HepG2 (cell line): ENCODE measurements at regions of chr11 and their contacts with region 1.

Region 1: GRCh38 chr11:77047007-77047927 is 13.1 kb downstream of the B3GNT6 start:
- DNase-seq: peak; percentile 91
- ATAC-seq: peak; percentile 79
- H3K4me3 ChIP-seq: peak overlapping the region; percentile 14 to 62 (median 57); a peak in 3 of 6 replicates
- H3K27ac ChIP-seq: no peak overlapping the region
- H3K4me1 ChIP-seq: peaks cover 38% of the 10 kb centered on the region
- H3K27me3 ChIP-seq: peaks cover 0 to 23% of the 10 kb centered on the region in 2 experiments; a peak in 3 of 5 replicates
- CTCF ChIP-seq: peak; percentile 65
- EP300 ChIP-seq: no peak
- POLR2A ChIP-seq: no peak
- RAD21 ChIP-seq: peak; percentile 42; the same call in 1 of the 2 replicates

Region 2: GRCh38 chr11:76721755-76722677 is 325.3 kb before region 1 on chr11:
- CTCF ChIA-PET with region 1: no interaction called
- POLR2A ChIA-PET with region 1: no interaction called
- in situ Hi-C with region 1: no loop called
- intact Hi-C with region 1: loop called (anchors 10 kb)
- DNase-seq: peak; percentile 58
- ATAC-seq: peak; percentile 94
- H3K4me3 ChIP-seq: peak overlapping the region in 1 of 3 experiments; percentile 41; a peak in 1 of 6 replicates
- H3K27ac ChIP-seq: no peak overlapping the region
- H3K4me1 ChIP-seq: peaks cover 5% of the 10 kb centered on the region; the same call in 1 of the 2 replicates
- H3K27me3 ChIP-seq: peaks cover 0 to 18% of the 10 kb centered on the region in 2 experiments; a peak in 3 of 5 replicates
- CTCF ChIP-seq: peak; percentile 93
- EP300 ChIP-seq: no peak
- POLR2A ChIP-seq: no peak
- RAD21 ChIP-seq: peak; percentile 65; the same call in 1 of the 2 replicates

Region 3: GRCh38 chr11:76807206-76807875 is 239.9 kb before region 1 on chr11:
- CTCF ChIA-PET with region 1: interaction called, 3 read pairs
- POLR2A ChIA-PET with region 1: no interaction called
- in situ Hi-C with region 1: no loop called
- intact Hi-C with region 1: loop called (anchors 5 kb)
- DNase-seq: peak; percentile 68
- ATAC-seq: peak; percentile 93
- H3K4me3 ChIP-seq: peak overlapping the region in 1 of 3 experiments; percentile 20; a peak in 1 of 6 replicates
- H3K27ac ChIP-seq: no peak overlapping the region
- H3K4me1 ChIP-seq: peaks cover 22% of the 10 kb centered on the region
- H3K27me3 ChIP-seq: peaks cover 6 to 19% of the 10 kb centered on the region in 2 experiments; a peak in 4 of 5 replicates
- CTCF ChIP-seq: peak; percentile 92
- EP300 ChIP-seq: no peak
- POLR2A ChIP-seq: no peak
- RAD21 ChIP-seq: peak; percentile 67

Region 4: GRCh38 chr11:77073328-77074001 is 26.2 kb after region 1 on chr11:
- CTCF ChIA-PET with region 1: interaction called, 11 read pairs
- POLR2A ChIA-PET with region 1: no interaction called
- in situ Hi-C with region 1: no loop called
- intact Hi-C with region 1: no loop called
- DNase-seq: peak; percentile 45
- ATAC-seq: peak; percentile 89
- H3K4me3 ChIP-seq: no peak overlapping the region
- H3K27ac ChIP-seq: no peak overlapping the region
- H3K4me1 ChIP-seq: peaks cover 25% of the 10 kb centered on the region
- H3K27me3 ChIP-seq: peaks cover 4 to 46% of the 10 kb centered on the region in 2 experiments
- CTCF ChIP-seq: peak; percentile 60
- EP300 ChIP-seq: no peak
- POLR2A ChIP-seq: no peak
- RAD21 ChIP-seq: peak; percentile 15; the same call in 1 of the 2 replicates

Region 5: DNA sequence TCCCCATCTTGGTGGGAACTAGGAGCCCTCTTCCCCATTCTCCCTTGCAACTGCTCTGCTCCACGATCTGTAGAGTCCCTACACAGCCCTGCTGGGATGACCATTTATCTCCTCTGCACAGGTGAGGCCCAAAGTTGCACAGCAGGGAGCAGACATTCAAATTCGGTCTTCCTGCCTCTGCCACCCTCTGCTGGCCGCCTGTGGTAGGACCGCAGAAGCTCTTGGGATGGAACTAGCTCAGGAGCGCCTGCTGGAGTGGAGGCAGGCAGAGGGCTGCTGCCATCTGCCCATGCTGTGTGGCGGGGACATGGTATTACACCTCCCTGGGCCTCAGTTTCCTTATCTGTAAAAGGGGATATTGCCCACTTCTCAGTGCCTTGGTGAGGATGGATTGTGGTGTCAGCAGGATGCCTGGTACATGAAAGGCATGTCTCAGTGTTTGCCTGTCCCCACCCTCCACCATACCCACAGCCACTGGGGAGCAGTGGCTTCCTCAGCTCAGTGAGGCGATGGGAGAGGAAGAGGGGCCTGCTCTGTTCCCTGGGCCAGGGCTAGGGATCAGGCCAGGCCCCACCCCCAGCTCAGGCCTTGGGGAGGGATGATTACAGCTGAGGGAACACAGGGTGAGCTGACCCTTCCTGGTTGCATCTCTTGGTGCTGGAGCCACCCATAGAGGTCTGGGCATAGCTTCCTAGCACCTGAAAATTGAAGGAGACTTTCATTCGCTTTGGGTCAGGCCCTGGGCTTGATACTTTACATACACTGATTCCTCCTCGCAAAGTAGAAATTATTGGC is 44.1 kb after region 1 on chr11:
- CTCF ChIA-PET with region 1: interaction called, 85 read pairs
- POLR2A ChIA-PET with region 1: interaction called, 16 read pairs
- in situ Hi-C with region 1: loop called (anchors 5 kb)
- intact Hi-C with region 1: no loop called
- DNase-seq: peak; percentile 60
- ATAC-seq: peak; percentile 62
- H3K4me3 ChIP-seq: no peak overlapping the region
- H3K27ac ChIP-seq: no peak overlapping the region
- H3K4me1 ChIP-seq: peaks cover 38% of the 10 kb centered on the region
- H3K27me3 ChIP-seq: no peaks in the 10 kb centered on the region; a peak in 1 of 5 replicates
- CTCF ChIP-seq: peak; percentile 97
- EP300 ChIP-seq: no peak
- POLR2A ChIP-seq: no peak
- RAD21 ChIP-seq: peak; percentile 94

Region 6: DNA sequence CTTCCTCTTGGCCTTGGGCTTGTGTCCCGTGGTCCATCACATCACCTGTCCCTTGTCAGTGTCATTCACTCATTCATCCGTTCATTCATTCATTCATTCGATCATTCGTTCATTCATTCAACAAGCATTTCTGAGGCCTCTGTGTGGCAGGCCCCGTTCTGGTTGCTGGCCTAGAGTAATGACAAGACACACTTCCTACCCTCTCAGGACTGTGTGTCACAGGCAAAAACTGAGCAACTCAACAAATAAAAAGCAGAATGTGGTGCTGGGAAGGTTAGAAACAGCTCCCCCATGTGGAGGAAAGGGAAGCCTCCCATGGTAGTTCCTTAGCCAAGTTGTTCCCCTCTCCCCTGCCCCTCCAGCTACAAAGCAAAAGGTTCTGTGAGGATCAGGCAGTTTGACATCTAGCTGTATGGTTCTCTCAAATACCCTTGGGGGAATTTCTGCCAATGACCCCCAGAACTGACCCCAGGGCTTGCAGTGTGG is 53.8 kb after region 1 on chr11:
- CTCF ChIA-PET with region 1: interaction called, 18 read pairs
- POLR2A ChIA-PET with region 1: interaction called, 3 read pairs
- in situ Hi-C with region 1: no loop called
- intact Hi-C with region 1: loop called (anchors 2 kb)
- DNase-seq: peak; percentile 41
- ATAC-seq: peak; percentile 45
- H3K4me3 ChIP-seq: no peak overlapping the region
- H3K27ac ChIP-seq: no peak overlapping the region
- H3K4me1 ChIP-seq: peaks cover 22% of the 10 kb centered on the region
- H3K27me3 ChIP-seq: peaks cover 1 to 4% of the 10 kb centered on the region in 2 experiments; a peak in 2 of 5 replicates
- CTCF ChIP-seq: peak; percentile 56
- EP300 ChIP-seq: no peak
- POLR2A ChIP-seq: no peak
- RAD21 ChIP-seq: no peak

Region 7: DNA sequence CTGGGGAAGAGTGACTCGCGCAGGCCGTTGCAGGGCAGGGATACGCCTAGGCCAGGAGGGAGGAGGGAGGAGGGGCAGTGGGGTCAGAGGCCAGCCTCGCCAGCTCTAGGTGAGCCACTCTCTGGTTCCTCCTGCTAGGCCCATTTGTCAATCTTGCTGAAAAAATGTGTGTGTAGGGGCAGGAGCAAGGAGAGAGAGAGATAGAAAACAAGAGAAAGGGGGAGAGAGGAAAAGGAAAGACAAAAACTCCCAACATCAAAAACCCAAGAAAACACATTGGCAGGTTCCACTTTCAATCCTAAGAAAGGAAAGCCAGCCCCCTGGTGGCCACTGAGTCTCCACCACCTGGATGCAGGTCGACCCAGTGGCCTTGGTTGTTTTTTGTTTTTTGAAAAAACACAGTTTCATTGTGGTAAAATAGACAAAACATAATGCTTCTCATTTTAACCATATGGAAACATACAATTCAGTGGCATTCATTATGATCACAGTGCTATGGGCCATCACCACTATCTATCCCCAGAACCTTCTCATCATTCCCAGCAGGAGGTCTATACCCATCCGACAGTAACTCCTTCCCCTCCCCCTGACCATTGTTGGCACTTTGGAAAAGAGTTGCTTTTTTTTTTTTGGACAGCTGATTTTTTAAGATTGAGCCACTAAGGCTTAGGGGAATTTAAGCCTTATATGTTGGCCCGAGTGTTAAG is 66.3 kb after region 1 on chr11:
- CTCF ChIA-PET with region 1: interaction called, 19 read pairs
- POLR2A ChIA-PET with region 1: no interaction called
- in situ Hi-C with region 1: no loop called
- intact Hi-C with region 1: loop called (anchors 1 kb)
- DNase-seq: no peak
- ATAC-seq: peak; percentile 63
- H3K4me3 ChIP-seq: peak overlapping the region in 1 of 3 experiments; percentile 31; a peak in 1 of 6 replicates
- H3K27ac ChIP-seq: no peak overlapping the region
- H3K4me1 ChIP-seq: peaks cover 14% of the 10 kb centered on the region
- H3K27me3 ChIP-seq: peaks cover 0 to 4% of the 10 kb centered on the region in 2 experiments; a peak in 1 of 5 replicates
- CTCF ChIP-seq: peak; percentile 66
- EP300 ChIP-seq: no peak
- POLR2A ChIP-seq: no peak
- RAD21 ChIP-seq: no peak

Region 8: GRCh38 chr11:77147668-77148321 is 100.5 kb after region 1 on chr11:
- CTCF ChIA-PET with region 1: no interaction called
- POLR2A ChIA-PET with region 1: no interaction called
- in situ Hi-C with region 1: no loop called
- intact Hi-C with region 1: no loop called
- DNase-seq: no peak
- ATAC-seq: no peak
- H3K4me3 ChIP-seq: no peak overlapping the region
- H3K27ac ChIP-seq: no peak overlapping the region
- H3K4me1 ChIP-seq: peaks cover 44% of the 10 kb centered on the region
- H3K27me3 ChIP-seq: no peaks in the 10 kb centered on the region
- CTCF ChIP-seq: no peak
- EP300 ChIP-seq: no peak
- POLR2A ChIP-seq: no peak
- RAD21 ChIP-seq: no peak

Region 9: GRCh38 chr11:77411717-77412441 is 364.6 kb after region 1 on chr11:
- CTCF ChIA-PET with region 1: no interaction called
- POLR2A ChIA-PET with region 1: no interaction called
- in situ Hi-C with region 1: no loop called
- intact Hi-C with region 1: no loop called
- DNase-seq: no peak
- ATAC-seq: no peak
- H3K4me3 ChIP-seq: no peak overlapping the region
- H3K27ac ChIP-seq: no peak overlapping the region
- H3K4me1 ChIP-seq: peaks cover 16% of the 10 kb centered on the region
- H3K27me3 ChIP-seq: peaks cover 0 to 1% of the 10 kb centered on the region in 2 experiments; a peak in 2 of 5 replicates
- CTCF ChIP-seq: no peak
- EP300 ChIP-seq: no peak
- POLR2A ChIP-seq: no peak
- RAD21 ChIP-seq: no peak